ENCODE measurements at regions of chr11 and their contacts with region 1.

Region 1: DNA sequence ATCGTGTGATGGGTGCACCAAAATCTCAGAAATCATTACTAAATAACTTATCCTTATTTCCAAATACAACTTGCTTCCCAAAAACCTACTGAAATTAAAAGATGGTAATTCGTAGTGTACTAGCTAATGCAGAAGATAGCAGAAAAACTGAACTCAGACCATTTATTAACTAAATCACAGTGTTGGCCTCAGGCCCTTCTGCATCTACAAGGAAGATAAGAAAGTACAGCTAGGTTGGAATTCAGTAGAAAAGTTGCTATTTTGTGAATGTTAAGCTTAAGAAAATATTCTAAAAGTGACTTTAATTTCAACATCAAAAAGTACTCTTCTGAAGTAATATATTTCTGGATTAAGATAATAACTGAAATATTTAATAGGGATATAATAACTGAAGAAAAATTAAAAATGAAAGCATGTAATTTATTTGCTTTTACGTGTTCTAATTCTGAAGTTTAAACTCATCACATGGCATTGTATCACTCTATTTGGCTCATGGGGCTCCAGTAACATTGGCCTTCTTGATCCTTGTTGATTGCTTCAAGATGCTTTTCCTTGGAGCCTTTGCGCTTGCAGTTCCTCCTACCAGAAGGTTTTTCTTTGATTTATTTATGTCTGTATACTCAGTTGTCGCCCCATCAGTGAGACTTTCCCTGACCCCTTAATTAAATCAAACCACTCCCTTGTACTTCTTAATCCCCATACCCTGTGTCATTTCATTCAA is 847.9 kb upstream of the ANO3 start:
- DNase-seq: no peak
- H3K4me3 ChIP-seq: no peak overlapping the region
- H3K4me3 Mint-ChIP-seq: no peak overlapping the region
- H3K27ac ChIP-seq: no peak overlapping the region
- H3K27ac Mint-ChIP-seq: no peak overlapping the region
- H3K4me1 ChIP-seq: no peaks in the 10 kb centered on the region
- H3K4me1 Mint-ChIP-seq: no peaks in the 10 kb centered on the region
- H3K27me3 ChIP-seq: no peaks in the 10 kb centered on the region
- H3K27me3 Mint-ChIP-seq: no peaks in the 10 kb centered on the region
- CTCF ChIP-seq: no peak

Region 2: DNA sequence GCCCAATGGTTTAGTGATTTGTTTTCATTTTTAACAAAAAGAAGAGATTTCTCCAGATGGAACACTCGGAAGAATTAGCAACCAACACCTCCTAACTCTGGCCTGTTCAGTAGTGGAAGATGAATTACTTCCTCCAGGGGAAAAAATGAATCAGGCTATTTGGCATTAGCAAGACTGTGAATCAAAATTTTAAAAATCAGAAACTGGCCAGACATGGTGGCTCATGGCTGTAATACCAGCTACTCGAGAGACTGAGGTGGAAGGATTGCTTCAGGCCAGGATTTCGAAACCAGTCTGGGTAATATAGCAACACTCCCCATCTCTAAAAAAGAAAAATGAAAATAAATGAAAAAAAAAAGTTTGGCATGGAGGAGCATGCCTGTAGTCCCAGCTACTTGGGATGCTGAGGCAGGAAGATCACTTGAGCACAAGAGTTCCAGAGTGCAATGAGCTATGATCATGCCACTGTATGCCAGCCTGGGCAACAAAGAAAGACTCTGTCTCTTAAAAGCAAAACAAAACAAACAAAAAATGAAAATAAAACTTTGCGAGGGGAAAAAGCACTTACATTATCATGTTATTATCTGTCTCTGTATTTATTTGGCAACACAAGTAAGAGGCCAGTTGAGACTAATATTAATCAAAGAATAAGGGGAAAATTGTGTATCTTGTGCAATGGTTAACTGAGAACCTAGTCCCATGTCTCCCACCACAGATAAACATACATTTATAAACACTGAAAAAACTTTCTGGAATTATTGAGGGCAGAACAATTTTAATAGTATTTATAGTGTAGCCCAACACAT is 51.6 kb after region 1 on chr11:
- intact Hi-C with region 1: loop called in 1 of 2 experiments (anchors 10 kb)
- DNase-seq: no peak
- H3K4me3 ChIP-seq: no peak overlapping the region
- H3K4me3 Mint-ChIP-seq: no peak overlapping the region
- H3K27ac ChIP-seq: no peak overlapping the region
- H3K27ac Mint-ChIP-seq: no peak overlapping the region
- H3K4me1 ChIP-seq: no peaks in the 10 kb centered on the region
- H3K4me1 Mint-ChIP-seq: no peaks in the 10 kb centered on the region
- H3K27me3 ChIP-seq: no peaks in the 10 kb centered on the region
- H3K27me3 Mint-ChIP-seq: no peaks in the 10 kb centered on the region
- CTCF ChIP-seq: no peak